ENCODE measurements at regions of chr12 and their contacts with region 1.

Region 1: GRCh38 chr12:63779498-63780481 is at the start of gene RXYLT1:
- DNase-seq: peak; percentile 74 to 86 (median 81)
- H3K4me3 ChIP-seq: peak within 1 kb of the TSS; percentile 38 to 96
- H3K4me3 Mint-ChIP-seq: peak within 1 kb of the TSS; percentile 93 to 99 (median 97)
- H3K27ac ChIP-seq: peak within 1 kb of the TSS; percentile 84
- H3K27ac Mint-ChIP-seq: peak within 1 kb of the TSS; percentile 91 to 98 (median 95)
- H3K4me1 ChIP-seq: peaks cover 19% of the 10 kb centered on the region
- H3K4me1 Mint-ChIP-seq: peaks cover 11 to 35% (median 16%) of the 10 kb centered on the region in 4 donors
- H3K27me3 ChIP-seq: no peaks in the 10 kb centered on the region
- H3K27me3 Mint-ChIP-seq: no peaks in the 10 kb centered on the region
- total RNA-seq, gene RXYLT1: 14.5 to 15.1 TPM

Region 2: GRCh38 chr12:62268956-62269355 is 1510.8 kb before region 1 on chr12:
- CTCF ChIA-PET with region 1: no interaction called
- POLR2A ChIA-PET with region 1: no interaction called
- intact Hi-C with region 1: loop called (anchors 5 kb)
- DNase-seq: no peak
- H3K4me3 ChIP-seq: no peak overlapping the region
- H3K4me3 Mint-ChIP-seq: peak overlapping the region in 6 of 8 donors; percentile 9 to 76 (median 34)
- H3K27ac ChIP-seq: no peak overlapping the region
- H3K27ac Mint-ChIP-seq: peak overlapping the region in 1 of 7 donors; percentile 63
- H3K4me1 ChIP-seq: peaks cover 97% of the 10 kb centered on the region
- H3K4me1 Mint-ChIP-seq: peaks cover 72 to 93% (median 83%) of the 10 kb centered on the region in 4 donors
- H3K27me3 ChIP-seq: no peaks in the 10 kb centered on the region
- H3K27me3 Mint-ChIP-seq: no peaks in the 10 kb centered on the region

Measured in CD4-positive, alpha-beta memory T cell (primary cell).